Ascending aorta (tissue), 2 donors: ENCODE measurements at regions of chr9 and their contacts with region 1.

Region 1: DNA sequence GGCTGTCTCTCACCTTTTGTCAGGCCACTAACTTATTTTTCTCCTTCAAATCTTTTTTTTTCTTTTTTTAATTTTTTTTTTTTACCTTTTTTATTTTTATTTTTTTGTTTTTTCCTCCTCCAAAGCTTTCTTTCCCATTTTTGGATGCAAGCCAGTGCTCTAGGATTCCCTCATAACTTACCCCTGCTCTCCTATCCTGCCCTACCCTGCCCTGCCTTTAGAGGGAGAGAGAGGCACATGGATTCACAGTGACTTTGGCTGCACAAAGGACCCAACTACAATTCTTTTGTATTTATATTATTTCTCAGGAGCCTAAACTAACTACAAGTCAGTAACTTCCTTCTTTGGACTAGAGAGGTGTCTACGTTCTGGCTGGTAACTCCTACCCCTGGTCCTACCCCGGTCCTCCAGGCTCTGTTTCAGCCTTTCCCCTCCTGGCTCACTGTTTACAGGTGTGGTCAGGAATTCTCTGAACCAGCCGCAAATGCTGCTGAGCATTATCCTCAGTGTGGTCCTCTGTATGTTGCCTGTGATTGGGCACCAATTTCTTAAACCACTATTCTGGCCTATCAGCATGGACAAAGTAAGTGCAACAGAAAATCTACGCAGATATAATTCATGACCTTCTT is 8.4 kb upstream of the RUSC2 start:
- DNase-seq: peak in 1 of 2 donors; percentile 76
- H3K4me3 ChIP-seq: no peak overlapping the region
- H3K27ac ChIP-seq: peak overlapping the region in 1 of 2 donors; percentile 49
- H3K4me1 ChIP-seq: no peaks in the 10 kb centered on the region
- H3K27me3 ChIP-seq: no peaks in the 10 kb centered on the region
- CTCF ChIP-seq: peak; percentile 53 to 68 (median 65)

Region 2: GRCh38 chr9:35385042-35385441 is 96.4 kb before region 1 on chr9:
- intact Hi-C with region 1: loop called (anchors 5 kb)
- DNase-seq: no peak
- H3K4me3 ChIP-seq: no peak overlapping the region
- H3K27ac ChIP-seq: no peak overlapping the region
- H3K4me1 ChIP-seq: no peaks in the 10 kb centered on the region
- H3K27me3 ChIP-seq: no peaks in the 10 kb centered on the region
- CTCF ChIP-seq: peak; percentile 25 to 50 (median 29)

Region 3: DNA sequence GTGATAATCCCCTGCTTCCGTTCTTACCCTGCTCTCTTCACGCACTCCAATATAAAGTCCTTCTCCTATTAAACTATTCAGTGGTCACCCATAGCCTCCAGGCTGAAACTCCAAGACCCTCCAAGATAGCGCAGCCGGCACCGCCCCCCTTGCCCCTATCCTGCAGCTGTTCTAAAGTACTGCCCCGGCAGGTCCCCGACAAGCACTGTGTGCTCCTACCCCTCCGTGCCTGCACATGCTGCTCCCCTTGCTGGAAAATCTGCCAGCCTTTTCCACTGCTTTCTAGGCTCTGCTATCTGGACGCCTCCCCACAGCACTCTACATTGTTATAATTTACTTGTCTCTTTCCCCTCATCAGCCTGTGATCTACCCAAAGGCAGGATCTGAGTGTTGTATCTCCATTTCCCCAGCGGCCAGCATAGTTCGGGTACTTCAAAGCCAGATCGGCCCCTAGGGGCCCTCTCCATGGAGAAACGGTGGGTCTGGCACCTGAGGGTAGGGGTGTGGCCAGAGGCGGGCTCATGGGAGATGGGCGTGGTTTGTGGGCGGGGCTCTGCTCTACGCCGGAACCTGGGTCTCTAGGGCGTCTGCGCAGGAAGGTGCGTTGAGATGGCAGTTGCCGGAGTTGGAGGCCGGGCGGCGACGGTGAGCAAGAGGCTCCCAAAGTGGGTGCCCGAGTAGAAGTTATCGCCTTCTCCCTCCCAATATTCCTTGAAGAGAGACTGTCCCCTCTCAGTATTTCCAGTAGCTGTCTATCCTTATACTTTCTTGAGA is 75.1 kb before region 1 on chr9:
- intact Hi-C with region 1: loop called (anchors 5 kb)
- DNase-seq: no peak
- H3K4me3 ChIP-seq: no peak overlapping the region
- H3K27ac ChIP-seq: no peak overlapping the region
- H3K4me1 ChIP-seq: no peaks in the 10 kb centered on the region
- H3K27me3 ChIP-seq: no peaks in the 10 kb centered on the region
- CTCF ChIP-seq: no peak